Ovary (tissue), 10 donors: ENCODE measurements at regions of chr3 and their contacts with region 1.

Region 1: DNA sequence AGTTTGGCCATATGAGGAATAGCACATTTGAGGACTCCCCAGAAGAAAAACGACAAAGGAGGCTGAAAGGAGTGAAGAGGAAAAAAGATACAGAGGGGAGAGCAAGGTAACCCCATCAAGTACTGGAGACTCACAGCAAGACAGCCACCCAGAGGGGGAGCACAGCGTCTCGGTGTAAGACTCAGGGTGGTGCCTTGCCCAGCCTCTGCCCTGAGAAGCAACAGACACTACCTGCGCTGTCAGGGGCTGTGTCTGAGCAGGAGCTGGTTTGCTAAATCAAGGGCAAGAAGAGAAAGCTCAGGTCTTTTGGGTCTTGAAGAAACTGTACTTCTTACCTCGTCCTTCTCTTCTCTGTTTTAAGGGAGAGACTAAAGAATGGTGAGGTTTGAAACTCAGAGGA is 27.9 kb downstream of the FBXO45 start:
- DNase-seq: no peak
- H3K4me3 ChIP-seq: no peak overlapping the region
- H3K27ac ChIP-seq: no peak overlapping the region
- H3K4me1 ChIP-seq: no peaks in the 10 kb centered on the region
- H3K27me3 ChIP-seq: no peaks in the 10 kb centered on the region
- CTCF ChIP-seq: no peak
- EP300 ChIP-seq: no peak
- POLR2A ChIP-seq: no peak

Region 2: DNA sequence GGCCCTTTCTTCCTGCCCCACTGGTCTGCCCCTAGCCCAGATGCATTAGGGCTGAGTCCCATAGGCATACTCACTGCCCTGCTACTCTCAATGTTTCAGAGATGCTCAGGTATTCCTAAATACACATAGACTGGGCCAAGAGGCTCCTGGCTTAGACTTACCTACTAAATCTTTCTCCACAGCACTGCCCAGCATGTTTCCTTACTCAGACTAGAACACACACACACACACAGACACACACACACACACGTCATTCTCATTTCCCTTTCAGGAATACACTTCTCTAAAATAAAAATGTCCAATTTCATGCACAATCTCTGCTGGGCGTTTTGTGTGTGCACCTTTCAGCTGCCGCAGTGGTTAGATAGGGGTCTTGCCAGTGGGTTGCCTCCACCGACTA is 1735.0 kb before region 1 on chr3:
- intact Hi-C with region 1: loop called in 1 of 4 experiments (anchors 5 kb)
- DNase-seq: no peak
- H3K4me3 ChIP-seq: no peak overlapping the region
- H3K27ac ChIP-seq: no peak overlapping the region
- H3K4me1 ChIP-seq: no peaks in the 10 kb centered on the region
- H3K27me3 ChIP-seq: no peaks in the 10 kb centered on the region
- CTCF ChIP-seq: no peak
- EP300 ChIP-seq: no peak
- POLR2A ChIP-seq: no peak